GM12878 (cell line): ENCODE measurements at regions of chr10 and their contacts with region 1.

Region 1: DNA sequence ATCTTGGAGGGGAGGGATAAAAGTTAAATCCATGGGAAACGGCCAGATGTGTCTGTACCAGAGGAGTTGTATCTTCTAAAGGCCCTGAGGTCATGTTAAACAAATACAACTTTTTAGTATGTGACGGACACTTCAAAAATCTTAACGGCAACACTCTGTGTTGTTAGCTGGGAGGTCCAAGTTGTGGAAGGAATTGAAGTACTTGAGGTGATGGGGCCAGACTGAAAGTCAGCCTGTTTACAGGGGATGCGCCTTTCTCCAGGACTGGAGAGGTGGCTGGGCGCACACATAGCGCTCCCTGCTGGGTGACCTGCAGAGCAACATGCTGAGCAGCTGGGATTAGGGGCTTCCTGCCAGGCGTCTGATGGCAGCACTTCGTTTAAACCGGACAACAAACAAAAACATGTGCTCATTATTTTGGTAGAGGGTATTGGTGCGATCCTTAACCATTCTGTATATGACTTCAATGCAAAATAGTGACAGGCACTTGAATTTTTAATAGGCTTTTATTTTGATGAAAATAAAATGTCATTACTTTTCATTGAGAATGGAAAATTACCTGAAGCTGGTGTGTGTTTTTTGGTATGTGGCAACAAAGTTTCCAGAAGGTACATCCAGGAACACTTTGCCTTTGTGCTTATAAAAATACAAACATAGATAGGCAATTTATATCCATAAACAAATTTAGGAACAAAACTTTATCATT is 198.2 kb downstream of the MLLT10 start:
- DNase-seq: no peak
- ATAC-seq: peak; percentile 82
- H3K4me3 ChIP-seq: no peak overlapping the region
- H3K27ac ChIP-seq: no peak overlapping the region
- H3K4me1 ChIP-seq: no peaks in the 10 kb centered on the region
- H3K27me3 ChIP-seq: no peaks in the 10 kb centered on the region
- CTCF ChIP-seq: peak; percentile 74 to 86 (median 79)
- EP300 ChIP-seq: no peak
- POLR2A ChIP-seq: no peak
- RAD21 ChIP-seq: peak; percentile 92

Region 2: DNA sequence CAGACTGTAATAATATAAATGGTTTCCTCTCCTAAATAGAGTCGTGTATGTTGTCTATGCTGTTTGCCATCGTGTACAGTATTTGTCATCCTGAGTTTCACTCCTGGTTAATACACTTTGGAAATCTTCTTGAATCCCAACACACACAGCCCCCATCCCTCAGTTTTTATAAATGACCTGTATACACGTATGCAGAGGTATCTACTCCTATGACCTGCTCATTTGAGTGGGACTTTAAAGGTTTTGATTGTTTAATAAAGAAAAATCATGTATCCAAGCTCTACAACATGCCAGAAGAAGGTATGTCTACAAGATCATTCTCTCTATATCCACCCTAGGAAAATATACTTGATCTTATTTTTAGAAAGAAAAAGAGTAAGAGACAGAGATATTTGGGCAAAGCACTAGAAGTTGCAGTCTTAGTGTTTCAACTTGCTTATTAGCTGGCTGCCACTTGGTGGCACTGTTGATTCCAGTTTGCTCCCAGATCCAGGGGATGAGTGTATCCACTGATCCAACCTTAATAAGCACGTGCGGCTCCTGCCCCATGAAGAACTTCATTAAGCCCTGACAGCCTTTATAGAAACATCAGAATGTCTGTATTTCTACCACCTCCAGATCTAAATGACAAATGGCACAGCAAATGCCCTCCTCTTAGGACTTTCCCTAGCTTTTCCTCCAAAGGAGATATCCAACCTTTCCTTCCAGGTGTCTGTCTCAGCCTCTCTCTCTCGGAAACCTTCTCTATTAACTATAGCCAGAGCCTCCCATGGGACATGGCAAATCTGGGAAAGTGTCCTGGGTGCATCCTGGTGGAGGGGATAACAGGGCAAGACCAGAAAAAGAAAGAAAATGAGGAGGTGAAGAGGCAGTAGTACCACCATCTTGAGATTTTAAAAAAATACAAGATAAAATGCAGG is 653.5 kb before region 1 on chr10:
- CTCF ChIA-PET with region 1: interaction called, 3 read pairs
- POLR2A ChIA-PET with region 1: no interaction called
- RAD21 ChIA-PET with region 1: no interaction called
- SMC1A ChIA-PET with region 1: no interaction called
- in situ Hi-C with region 1: no loop called
- intact Hi-C with region 1: loop called (anchors 10 kb)
- DNase-seq: no peak
- ATAC-seq: peak; percentile 89
- H3K4me3 ChIP-seq: no peak overlapping the region
- H3K27ac ChIP-seq: no peak overlapping the region
- H3K4me1 ChIP-seq: no peaks in the 10 kb centered on the region
- H3K27me3 ChIP-seq: no peaks in the 10 kb centered on the region; a peak in 2 of 4 replicates
- CTCF ChIP-seq: peak; percentile 68 to 69 (median 69)
- EP300 ChIP-seq: no peak
- POLR2A ChIP-seq: no peak
- RAD21 ChIP-seq: peak; percentile 74

Region 3: DNA sequence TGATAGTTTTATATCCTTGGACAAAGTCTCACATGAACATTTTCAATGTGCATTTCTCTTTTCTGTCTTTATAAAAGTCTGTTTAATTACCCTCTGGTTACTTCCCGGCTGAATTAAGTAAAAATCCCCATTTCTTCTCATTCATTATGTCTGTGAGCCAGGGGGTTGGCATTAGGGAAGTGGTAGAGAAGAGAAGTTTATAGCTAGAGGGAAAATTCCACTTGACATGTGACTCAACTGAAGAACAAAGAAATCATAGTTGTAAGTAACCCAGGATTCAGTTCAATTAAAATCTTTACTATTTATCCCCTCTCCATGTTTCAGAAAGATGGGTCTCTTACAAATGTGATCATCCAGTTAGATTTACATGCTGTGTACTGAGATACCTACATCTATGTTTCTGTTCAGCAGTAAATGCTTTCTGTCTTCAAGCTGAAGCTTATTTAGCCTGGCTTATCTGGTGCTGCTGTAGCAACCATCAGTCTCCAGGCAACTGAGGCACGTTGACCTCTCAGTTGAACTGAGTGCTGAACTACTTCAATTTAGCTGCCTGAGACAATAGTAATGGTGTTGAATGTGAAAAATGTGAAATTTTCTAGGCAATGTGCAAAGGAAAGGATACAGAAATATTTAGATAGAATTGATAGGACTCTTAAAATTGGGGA is 16.6 kb before region 1 on chr10:
- CTCF ChIA-PET with region 1: interaction called, 12 read pairs
- POLR2A ChIA-PET with region 1: no interaction called
- RAD21 ChIA-PET with region 1: no interaction called
- SMC1A ChIA-PET with region 1: interaction called, 14 read pairs
- in situ Hi-C with region 1: no loop called
- intact Hi-C with region 1: no loop called
- DNase-seq: no peak
- ATAC-seq: no peak
- H3K4me3 ChIP-seq: no peak overlapping the region
- H3K27ac ChIP-seq: no peak overlapping the region
- H3K4me1 ChIP-seq: peaks cover 9% of the 10 kb centered on the region
- H3K27me3 ChIP-seq: no peaks in the 10 kb centered on the region
- CTCF ChIP-seq: no peak
- EP300 ChIP-seq: no peak
- POLR2A ChIP-seq: no peak
- RAD21 ChIP-seq: no peak

Region 4: DNA sequence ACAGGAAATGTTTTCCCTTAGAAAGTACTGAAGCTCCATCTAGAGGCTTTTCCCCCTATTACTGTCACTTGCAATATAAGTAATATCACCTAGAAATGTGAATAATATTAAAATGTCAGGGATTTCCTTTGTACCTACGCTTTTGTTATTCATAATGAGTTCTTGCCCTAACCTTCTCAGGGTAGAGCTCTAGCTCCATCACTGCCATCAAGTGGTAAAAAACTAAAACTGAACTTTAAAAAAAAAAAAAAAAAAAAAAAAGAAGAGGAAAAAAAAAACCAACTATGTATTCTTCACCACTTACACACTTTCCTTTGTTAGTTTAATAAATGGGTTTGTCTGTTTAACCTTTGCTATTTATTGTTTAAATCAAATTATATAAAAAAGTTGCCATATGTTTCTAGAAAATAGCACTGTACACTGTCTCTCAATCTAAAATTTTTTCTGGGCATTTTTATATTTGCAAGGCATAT is 221.4 kb after region 1 on chr10:
- CTCF ChIA-PET with region 1: interaction called, 9 read pairs
- POLR2A ChIA-PET with region 1: no interaction called
- RAD21 ChIA-PET with region 1: interaction called, 7 read pairs
- SMC1A ChIA-PET with region 1: no interaction called
- in situ Hi-C with region 1: no loop called
- intact Hi-C with region 1: loop called (anchors 5 kb)
- DNase-seq: no peak
- ATAC-seq: peak; percentile 88
- H3K4me3 ChIP-seq: no peak overlapping the region
- H3K27ac ChIP-seq: no peak overlapping the region
- H3K4me1 ChIP-seq: peaks cover 12% of the 10 kb centered on the region
- H3K27me3 ChIP-seq: no peaks in the 10 kb centered on the region
- CTCF ChIP-seq: peak; percentile 33 to 39 (median 37); a peak in 4 of 6 replicates
- EP300 ChIP-seq: no peak
- POLR2A ChIP-seq: no peak
- RAD21 ChIP-seq: peak; percentile 67